GM10248 (cell line): ENCODE measurements at regions of chr4 and their contacts with region 1.

Region 1: DNA sequence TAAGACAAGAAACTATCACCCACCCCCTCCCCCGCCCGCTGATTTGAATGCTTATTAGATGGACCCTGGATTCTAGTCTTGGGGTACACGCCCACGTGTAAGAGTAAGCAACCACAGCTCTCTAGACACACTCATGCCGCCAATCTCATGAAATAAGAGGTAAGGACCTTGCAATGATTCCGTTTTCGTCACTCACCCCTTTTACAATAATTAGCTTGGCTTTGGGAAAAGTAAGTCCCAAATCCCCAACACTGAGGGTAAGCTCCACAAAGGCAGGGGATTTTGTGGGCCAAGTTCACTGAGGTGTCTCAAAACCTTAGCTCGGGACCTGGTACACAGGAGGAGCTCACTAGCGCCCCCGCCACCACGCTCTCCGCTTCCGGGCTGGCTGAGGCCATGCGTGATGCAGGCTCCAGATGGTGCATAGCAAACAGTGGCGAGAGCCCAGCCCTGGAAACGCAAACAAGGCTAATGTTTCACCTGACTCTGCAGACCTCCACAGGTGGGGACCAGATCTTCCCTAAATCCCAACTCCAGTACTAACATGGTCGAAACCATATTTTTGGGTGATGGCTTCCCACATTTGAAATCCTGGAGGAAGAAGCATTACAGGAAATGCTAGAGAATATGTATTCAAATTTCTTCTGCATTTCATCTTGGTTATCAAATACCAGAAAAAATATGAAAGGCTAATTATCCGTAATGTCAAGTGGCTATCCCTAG is 4.1 kb downstream of the PLAC8 start:
- DNase-seq: peak; percentile 83
- CTCF ChIP-seq: peak; percentile 89

Region 2: DNA sequence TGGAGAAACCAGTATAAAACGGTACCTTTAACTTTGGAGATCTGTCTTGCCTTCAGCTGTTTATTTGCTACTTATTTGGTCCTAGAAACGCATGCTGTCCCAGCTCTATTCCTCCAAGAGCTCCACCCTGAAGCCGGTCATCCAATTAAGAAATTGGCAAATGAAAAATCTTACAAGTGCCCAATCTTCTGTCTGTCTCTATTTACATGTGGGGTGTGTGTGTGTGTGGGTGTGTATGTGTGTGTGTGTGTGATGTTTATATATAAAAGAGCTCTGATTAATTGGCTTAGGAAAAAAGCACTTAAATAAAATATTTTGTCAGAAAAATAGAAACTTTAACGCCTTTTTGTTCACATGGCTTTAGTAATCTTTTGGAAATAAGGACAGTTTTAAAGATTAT is 13.4 kb before region 1 on chr4:
- CTCF ChIA-PET with region 1: interaction called, 13 read pairs
- POLR2A ChIA-PET with region 1: no interaction called
- DNase-seq: no peak
- CTCF ChIP-seq: no peak

Region 3: DNA sequence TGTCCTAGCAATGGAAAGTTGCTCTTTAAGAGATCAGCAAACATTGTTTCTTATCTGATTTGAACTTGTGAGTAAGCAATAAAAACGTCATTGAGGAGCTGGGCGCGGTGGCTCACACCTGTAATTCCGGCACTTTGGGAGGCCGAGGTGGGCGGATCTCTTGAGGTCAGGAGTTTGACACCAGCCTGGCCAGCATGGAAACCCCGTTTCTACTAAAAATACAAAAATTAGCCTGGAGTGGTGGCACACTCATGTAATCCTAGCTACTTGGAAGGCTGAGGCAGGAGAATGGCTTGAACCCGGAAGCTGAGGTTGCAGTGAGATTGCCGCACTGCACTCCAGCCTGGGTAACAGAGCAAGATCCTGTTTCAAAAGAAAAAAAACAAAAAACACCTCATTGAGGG is 15.4 kb after region 1 on chr4:
- CTCF ChIA-PET with region 1: interaction called, 11 read pairs
- POLR2A ChIA-PET with region 1: no interaction called
- DNase-seq: no peak
- CTCF ChIP-seq: no peak

Region 4: DNA sequence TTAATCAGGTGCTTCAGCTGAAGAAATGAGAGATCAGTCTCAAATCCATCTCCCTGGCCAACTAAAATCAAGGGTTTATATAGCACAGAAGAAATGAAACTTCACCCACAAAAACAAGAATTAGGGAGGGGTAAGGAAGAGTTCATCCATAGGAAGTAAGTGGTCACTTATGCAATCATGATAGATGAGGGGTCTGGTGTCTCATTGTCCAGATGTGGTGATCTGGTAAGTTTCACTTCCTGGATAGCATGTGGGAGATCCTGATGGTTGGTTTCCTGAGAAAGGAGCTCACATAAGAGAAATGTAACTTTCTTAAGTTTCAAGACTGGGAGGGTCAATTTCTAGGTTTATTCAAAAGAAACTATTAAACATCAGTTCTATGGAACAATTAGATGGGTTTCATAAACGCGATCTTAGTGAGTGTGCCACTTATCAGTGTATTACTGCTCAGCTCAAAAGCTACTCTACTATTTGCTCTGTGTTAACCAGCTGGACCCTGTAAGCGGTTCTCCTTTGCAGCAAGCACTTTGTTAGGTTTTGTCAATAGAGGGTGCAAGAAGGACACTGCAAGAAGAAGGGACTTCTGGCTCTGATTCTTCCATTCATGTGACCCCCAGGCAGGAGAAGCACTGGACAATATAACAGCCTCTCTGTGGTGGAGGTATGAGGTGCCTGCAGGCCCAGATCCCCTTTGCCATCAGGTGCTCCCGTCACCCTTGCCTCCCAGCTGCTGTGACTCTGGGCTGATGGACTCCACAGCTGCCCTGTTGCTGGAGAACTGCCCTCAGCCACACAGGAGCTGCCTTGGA is 259.7 kb after region 1 on chr4:
- CTCF ChIA-PET with region 1: no interaction called
- POLR2A ChIA-PET with region 1: no interaction called
- DNase-seq: no peak
- CTCF ChIP-seq: no peak